ENCODE measurements at regions of chr5 and their contacts with region 1.

Region 1: DNA sequence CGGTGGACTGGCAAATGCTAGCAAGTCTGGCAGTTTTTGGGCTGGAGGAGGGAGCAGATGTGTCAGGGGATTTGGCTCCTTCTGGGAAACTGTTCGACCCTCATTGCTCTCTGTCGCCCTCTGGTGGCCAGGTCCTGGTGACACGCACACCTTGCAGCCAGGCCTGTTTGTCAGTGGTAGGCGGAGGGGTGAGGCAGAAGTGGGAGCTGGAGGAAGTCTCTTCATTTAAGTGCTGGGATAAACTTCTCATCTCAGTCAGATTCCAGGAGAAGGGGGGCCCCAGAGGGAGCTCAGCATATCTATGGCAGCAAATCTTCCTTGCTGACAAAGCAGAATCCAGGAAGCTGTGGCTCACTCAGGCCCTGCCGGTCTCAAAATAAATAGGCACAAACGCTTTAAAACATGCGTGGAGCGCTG is 326.5 kb downstream of the ZSWIM6 start:
- DNase-seq: peak; percentile 90
- H3K4me3 Mint-ChIP-seq: no peak overlapping the region
- H3K27ac Mint-ChIP-seq: no peak overlapping the region
- H3K4me1 Mint-ChIP-seq: no peaks in the 10 kb centered on the region
- H3K27me3 Mint-ChIP-seq: peaks cover 11% of the 10 kb centered on the region

Region 2: GRCh38 chr5:60677844-60678664 is 980.5 kb before region 1 on chr5:
- CTCF ChIA-PET with region 1: no interaction called
- intact Hi-C with region 1: loop called (anchors 2 kb)
- DNase-seq: no peak
- H3K4me3 Mint-ChIP-seq: no peak overlapping the region
- H3K27ac Mint-ChIP-seq: no peak overlapping the region
- H3K4me1 Mint-ChIP-seq: peaks cover 2% of the 10 kb centered on the region
- H3K27me3 Mint-ChIP-seq: no peaks in the 10 kb centered on the region

Region 3: DNA sequence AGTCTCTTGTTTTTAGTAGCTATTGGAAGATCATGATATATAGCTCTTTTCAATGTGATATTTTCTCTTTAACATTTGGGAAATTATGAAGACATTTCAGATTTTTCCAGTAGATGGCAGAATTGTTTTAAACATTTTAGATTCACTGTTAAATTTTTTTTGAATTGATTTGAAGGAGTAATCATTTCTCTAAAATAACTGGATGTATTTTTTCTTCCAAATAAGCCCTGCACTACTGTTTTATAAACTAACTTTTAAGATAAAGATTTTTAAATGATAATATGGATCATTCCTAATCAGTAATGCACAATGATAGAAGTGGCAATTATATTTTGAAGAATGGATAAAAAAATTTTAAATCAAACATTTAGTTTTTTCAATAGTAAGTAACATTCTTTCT is 699.4 kb before region 1 on chr5:
- CTCF ChIA-PET with region 1: interaction called, 16 read pairs
- intact Hi-C with region 1: loop called (anchors 1 kb)
- DNase-seq: no peak
- H3K4me3 Mint-ChIP-seq: no peak overlapping the region
- H3K27ac Mint-ChIP-seq: no peak overlapping the region
- H3K4me1 Mint-ChIP-seq: peaks cover 6% of the 10 kb centered on the region
- H3K27me3 Mint-ChIP-seq: no peaks in the 10 kb centered on the region

Region 4: DNA sequence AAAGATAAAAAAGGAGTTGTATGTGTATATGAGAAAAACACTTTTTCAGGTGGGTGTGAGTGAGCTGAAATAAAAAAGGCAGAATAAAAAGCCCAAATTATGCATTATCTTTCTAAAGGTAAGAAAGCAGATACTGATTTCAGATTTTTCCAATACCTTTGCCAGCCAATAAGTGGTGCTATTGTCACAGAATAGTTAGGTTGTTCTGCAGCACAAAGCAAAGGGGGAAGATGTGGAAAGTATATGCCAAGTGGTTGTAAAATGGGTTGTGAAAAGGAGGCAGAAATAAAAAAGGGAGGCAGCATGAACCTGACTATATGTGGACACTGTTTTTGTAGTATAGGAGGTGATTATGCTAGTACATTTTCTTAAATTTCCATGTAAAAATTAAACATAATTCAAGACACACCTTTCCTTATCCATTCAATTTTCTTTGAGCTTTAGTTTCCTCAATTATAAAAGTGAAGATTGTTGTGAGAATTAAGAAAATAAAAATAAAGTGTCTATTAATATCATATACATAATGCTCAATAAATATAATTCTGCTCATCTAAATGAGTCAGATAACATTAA is 603.1 kb before region 1 on chr5:
- CTCF ChIA-PET with region 1: interaction called, 5 read pairs
- intact Hi-C with region 1: loop called (anchors 1 kb)
- DNase-seq: no peak
- H3K4me3 Mint-ChIP-seq: no peak overlapping the region
- H3K27ac Mint-ChIP-seq: no peak overlapping the region
- H3K4me1 Mint-ChIP-seq: no peaks in the 10 kb centered on the region
- H3K27me3 Mint-ChIP-seq: no peaks in the 10 kb centered on the region

Region 5: DNA sequence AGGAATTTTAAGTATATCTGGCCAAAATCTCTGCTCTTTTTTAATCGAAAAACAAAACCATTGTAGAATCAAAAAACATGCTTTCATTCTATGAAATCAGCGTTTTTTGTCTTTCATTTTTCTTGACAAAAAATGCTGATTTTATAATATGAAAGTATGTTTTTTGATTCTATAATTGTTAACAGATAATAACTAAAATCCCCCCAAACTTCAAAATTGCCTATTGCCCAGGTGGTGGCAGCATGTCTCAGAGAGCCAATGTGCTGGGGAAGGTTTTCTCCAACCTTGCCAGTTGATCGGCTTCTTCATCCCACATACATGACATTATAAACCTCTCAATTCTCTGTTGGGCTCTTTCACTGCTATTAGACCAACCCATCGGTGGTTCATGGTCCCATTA is 491.2 kb before region 1 on chr5:
- CTCF ChIA-PET with region 1: no interaction called
- intact Hi-C with region 1: loop called (anchors 1 kb)
- DNase-seq: peak; percentile 22
- H3K4me3 Mint-ChIP-seq: no peak overlapping the region
- H3K27ac Mint-ChIP-seq: no peak overlapping the region
- H3K4me1 Mint-ChIP-seq: peaks cover 10% of the 10 kb centered on the region
- H3K27me3 Mint-ChIP-seq: no peaks in the 10 kb centered on the region

Region 6: DNA sequence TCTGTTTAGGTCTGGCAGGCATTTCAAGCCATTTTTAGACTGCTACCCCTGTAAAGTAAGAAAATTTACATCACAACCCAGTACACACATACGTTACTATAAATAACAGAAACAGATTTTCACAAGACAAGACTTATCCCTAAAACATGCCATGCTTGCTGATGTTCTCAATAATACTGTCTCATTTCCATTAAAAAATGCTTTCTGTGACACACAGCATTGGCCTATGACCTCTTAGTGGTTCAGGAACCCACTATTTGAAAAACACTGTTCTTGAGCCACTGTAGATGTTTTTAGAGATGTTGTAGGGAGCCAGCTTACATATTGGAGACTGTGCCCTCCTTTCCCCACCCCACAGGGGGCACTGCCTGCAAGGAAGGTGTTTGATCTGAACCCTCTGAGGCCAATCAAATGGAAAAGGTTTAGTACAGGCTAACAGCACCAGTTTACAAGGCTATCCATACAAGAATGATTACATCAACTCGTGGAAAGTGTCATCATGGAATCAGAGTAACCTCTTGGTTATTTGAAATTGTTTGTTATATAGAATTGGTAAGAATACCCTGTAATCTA is 295.7 kb before region 1 on chr5:
- CTCF ChIA-PET with region 1: no interaction called
- intact Hi-C with region 1: loop called (anchors 5 kb)
- DNase-seq: peak; percentile 16
- H3K4me3 Mint-ChIP-seq: no peak overlapping the region
- H3K27ac Mint-ChIP-seq: no peak overlapping the region
- H3K4me1 Mint-ChIP-seq: peaks cover 29% of the 10 kb centered on the region
- H3K27me3 Mint-ChIP-seq: no peaks in the 10 kb centered on the region

Region 7: GRCh38 chr5:61631438-61631941 is 27.1 kb before region 1 on chr5:
- CTCF ChIA-PET with region 1: no interaction called
- intact Hi-C with region 1: loop called (anchors 2 kb)
- DNase-seq: no peak
- H3K4me3 Mint-ChIP-seq: no peak overlapping the region
- H3K27ac Mint-ChIP-seq: no peak overlapping the region
- H3K4me1 Mint-ChIP-seq: no peaks in the 10 kb centered on the region
- H3K27me3 Mint-ChIP-seq: peaks cover 25% of the 10 kb centered on the region